ENCODE measurements at regions of chr6 and their contacts with region 1.

Region 1: GRCh38 chr6:149468179-149468578 is 16.6 kb downstream of the ZC3H12D start:
- DNase-seq: peak; percentile 37
- ATAC-seq: peak; percentile 48
- H3K4me3 Mint-ChIP-seq: peak overlapping the region; percentile 83
- H3K27ac Mint-ChIP-seq: peak overlapping the region; percentile 95
- H3K4me1 Mint-ChIP-seq: peaks cover 95% of the 10 kb centered on the region
- H3K27me3 Mint-ChIP-seq: no peaks in the 10 kb centered on the region
- CTCF ChIP-seq: no peak

Region 2: DNA sequence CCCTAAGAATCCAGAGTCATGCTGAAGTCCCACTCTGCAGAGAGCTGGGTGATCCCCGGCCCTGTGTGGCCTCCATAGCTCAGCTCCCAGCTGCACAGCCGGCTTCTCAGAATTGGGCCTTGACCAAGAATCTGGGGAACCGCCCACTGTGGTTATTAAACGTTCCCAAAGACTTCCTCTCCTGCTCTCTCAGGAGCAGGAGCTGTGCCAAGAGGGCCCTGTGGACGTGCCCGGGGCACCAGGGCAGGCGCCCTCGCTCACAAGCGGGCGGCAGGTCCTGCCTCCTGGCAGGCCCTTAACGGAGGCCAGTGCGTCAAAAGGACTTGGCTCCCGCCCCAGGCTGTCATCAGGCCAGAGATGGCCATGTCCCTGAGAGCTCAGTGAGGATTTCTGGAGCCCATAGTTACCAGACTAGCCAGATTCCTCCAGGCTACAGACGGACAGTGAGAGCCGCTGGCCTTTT is 13.8 kb before region 1 on chr6:
- CTCF ChIA-PET with region 1: interaction called, 4 read pairs
- POLR2A ChIA-PET with region 1: interaction called, 5 read pairs
- intact Hi-C with region 1: loop called (anchors 2 kb)
- DNase-seq: no peak
- ATAC-seq: no peak
- H3K4me3 Mint-ChIP-seq: no peak overlapping the region
- H3K27ac Mint-ChIP-seq: no peak overlapping the region
- H3K4me1 Mint-ChIP-seq: peaks cover 19% of the 10 kb centered on the region
- H3K27me3 Mint-ChIP-seq: no peaks in the 10 kb centered on the region
- CTCF ChIP-seq: no peak

Region 3: GRCh38 chr6:149484733-149485700 is 16.8 kb after region 1 on chr6 and contains the start of gene ZC3H12D:
- CTCF ChIA-PET with region 1: interaction called, 21 read pairs
- POLR2A ChIA-PET with region 1: no interaction called
- intact Hi-C with region 1: no loop called
- DNase-seq: peak; percentile 75
- ATAC-seq: peak; percentile 47
- H3K4me3 Mint-ChIP-seq: peak within 1 kb of the TSS; percentile 97
- H3K27ac Mint-ChIP-seq: peak within 1 kb of the TSS; percentile 99
- H3K4me1 Mint-ChIP-seq: peaks cover 87% of the 10 kb centered on the region
- H3K27me3 Mint-ChIP-seq: no peaks in the 10 kb centered on the region
- CTCF ChIP-seq: no peak
- total RNA-seq, gene ZC3H12D: 184 and 225 TPM in 2 replicates

Region 4: GRCh38 chr6:149493761-149494320 is 25.7 kb after region 1 on chr6:
- CTCF ChIA-PET with region 1: interaction called, 3 read pairs
- POLR2A ChIA-PET with region 1: interaction called, 53 read pairs
- intact Hi-C with region 1: loop called (anchors 1 kb)
- DNase-seq: no peak
- ATAC-seq: no peak
- H3K4me3 Mint-ChIP-seq: peak overlapping the region; percentile 29
- H3K27ac Mint-ChIP-seq: peak overlapping the region; percentile 87
- H3K4me1 Mint-ChIP-seq: peaks cover 88% of the 10 kb centered on the region
- H3K27me3 Mint-ChIP-seq: no peaks in the 10 kb centered on the region
- CTCF ChIP-seq: no peak

Region 5: DNA sequence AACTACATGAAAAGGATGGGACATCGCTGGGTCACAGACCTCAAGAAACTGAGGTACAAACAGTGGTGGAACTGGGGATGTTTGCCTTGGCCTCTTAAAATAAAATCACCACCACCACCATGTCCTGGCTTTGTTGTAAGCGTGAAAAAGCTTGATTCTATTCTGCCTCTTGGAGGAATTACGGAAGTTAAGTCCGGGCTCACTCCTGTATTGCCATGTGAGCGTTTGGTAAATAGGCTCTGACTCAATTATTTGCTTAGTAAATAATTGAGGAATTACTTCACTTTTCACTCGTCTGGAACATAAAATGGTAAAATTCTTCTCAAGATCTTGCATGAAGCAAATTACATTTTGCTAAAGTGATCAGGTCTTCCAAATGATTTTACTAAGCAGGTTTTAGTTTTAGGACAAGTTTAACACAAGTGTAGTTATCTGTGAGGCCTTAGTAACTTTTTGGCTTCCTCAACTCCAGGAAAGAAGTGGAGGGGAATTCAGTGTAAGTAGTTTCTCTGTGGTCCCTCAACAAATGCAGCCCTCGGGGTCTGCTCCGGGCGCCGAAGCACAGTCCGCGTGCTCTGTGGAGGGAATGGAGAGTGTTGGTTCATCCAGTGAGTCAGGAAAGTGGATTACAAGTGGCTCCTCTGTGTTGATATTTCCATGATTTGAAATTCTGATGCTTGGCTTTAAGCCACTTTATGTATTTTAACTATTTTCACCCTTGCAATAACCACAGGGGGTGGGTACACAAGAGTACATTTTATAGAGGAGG is 924.5 kb after region 1 on chr6:
- CTCF ChIA-PET with region 1: no interaction called
- POLR2A ChIA-PET with region 1: no interaction called
- intact Hi-C with region 1: no loop called
- DNase-seq: no peak
- ATAC-seq: no peak
- H3K4me3 Mint-ChIP-seq: no peak overlapping the region
- H3K27ac Mint-ChIP-seq: no peak overlapping the region
- H3K4me1 Mint-ChIP-seq: no peaks in the 10 kb centered on the region
- H3K27me3 Mint-ChIP-seq: peaks cover 14% of the 10 kb centered on the region
- CTCF ChIP-seq: no peak